Posterior vena cava (tissue), 2 donors: ENCODE measurements at regions of chr1 and their contacts with region 1.

Region 1: GRCh38 chr1:94805912-94806311 is 14.2 kb upstream of the SLC44A3 start:
- DNase-seq: no peak

Region 2: GRCh38 chr1:94522304-94522703 is 283.6 kb before region 1 on chr1:
- intact Hi-C with region 1: loop called (anchors 5 to 10 kb)
- DNase-seq: no peak

Region 3: DNA sequence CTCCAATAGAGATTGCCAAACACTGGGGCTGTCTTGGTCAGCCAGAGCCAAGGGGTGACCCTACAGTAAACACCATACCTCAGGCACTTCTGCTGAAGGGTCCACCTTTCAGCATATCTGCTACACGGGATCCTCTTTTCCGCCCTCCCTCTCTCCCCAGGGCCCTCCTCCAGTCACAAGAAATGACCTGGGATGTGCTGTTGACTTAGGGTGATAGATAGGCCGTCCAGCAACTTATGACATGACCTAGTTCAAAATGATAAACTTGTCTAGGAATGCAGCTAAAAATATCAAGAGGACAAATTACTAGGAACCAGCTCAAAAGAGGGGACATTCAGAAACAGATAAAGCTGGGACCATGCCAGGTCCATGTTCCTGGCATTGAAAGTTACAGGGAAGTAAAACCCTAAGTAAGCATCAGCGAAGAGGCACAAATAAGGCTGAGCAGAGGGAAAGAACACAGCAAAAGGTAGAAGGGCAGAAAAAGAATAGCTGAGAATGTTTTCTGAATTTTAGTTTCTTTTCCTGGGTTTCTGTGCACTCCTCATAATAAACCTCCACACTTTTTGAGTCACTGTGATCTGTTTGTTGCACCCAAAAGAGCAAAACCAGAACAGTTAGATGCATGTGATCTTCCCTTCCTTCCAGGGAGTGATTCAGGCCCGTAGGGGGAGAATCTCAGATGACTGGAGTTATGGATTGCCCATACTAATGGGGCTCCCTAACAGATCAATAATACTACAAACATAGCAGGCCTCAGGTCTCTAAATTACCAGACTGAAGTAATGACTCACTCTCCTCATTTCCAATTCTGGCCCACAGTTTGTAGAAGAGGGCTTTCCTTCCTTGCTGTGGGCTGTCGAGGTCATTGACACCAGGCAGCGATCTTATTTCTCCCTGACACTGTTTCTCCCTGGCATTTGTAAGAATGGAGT is 215.4 kb before region 1 on chr1:
- intact Hi-C with region 1: loop called in 1 of 2 experiments (anchors 5 kb)
- DNase-seq: no peak

Region 4: DNA sequence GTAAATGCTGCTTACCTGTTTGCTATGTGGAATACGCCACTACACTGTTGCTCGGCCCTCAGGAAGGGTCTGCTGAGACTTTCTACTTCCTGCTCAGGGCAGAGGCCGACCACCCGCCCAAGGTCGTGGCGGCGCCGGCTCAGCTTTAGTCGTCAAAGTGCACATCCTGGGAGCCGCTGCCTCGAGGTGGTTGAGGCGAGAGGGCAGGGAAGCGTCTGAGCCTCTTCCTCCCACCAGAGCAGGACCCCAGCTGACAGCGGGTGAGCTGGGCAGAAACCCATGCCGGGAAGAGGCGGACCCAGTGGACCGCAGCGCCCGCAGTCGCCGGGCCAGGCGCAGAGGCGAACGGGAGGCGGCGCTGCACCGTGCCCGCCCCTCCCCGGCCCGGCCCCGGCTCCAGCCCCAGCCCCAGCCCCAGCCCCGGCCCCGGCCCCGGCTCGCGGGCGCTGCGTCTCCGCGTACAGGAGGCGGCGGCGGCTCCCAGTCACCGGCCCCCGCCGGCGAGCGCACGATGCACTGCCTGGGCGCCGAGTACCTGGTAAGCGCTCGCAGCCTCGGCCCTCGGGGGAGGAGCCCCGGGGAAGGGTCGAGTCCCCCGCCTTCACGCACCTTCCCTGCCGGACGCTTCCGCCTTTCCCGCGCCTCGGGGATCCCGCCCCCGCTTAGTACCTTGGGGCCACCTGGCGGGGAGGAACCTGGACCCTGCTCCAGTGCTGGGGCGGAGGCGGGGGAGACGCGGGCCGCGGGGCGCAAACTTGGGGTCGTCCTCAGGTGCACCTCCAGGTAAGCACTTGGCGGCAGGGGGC is 14.2 kb after region 1 on chr1 and contains the start of gene SLC44A3:
- intact Hi-C with region 1: loop called in 1 of 2 experiments (anchors 1 kb)
- DNase-seq: peak; percentile 82
- total RNA-seq, gene SLC44A3: 7.7 to 10.9 TPM

Region 5: DNA sequence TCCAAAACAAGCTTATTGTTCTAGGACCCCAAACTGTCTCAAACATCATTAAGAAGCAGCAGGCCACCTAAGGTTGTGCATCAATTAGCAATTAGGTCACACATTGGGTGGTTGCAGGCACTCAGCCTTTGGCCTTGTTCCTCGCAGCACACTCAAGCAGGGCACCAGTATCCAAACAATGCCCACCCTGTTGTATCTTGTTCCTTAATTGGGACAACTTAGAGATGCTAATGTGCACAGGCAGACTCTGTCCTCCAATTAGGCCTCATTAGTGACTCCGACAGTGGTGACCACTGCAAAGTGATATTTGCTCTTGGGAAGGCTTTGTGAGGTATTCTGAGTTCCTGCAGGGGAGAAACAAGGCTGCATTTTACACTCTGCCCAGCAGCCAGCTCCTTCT is 1400.5 kb after region 1 on chr1:
- intact Hi-C with region 1: no loop called
- DNase-seq: no peak